Natural killer cell (primary cell): ENCODE measurements at regions of chr1 and their contacts with region 1.

Region 1: GRCh38 chr1:192516776-192517297 is 58.7 kb upstream of the RGS1 start:
- DNase-seq: peak; percentile 25 to 94
- ATAC-seq: peak; percentile 85 to 94 (median 93)
- H3K4me3 ChIP-seq: peak overlapping the region; percentile 1
- H3K4me3 Mint-ChIP-seq: peak overlapping the region; percentile 80
- H3K27ac ChIP-seq: peak overlapping the region; percentile 77
- H3K27ac Mint-ChIP-seq: peak overlapping the region; percentile 94 to 95
- H3K4me1 ChIP-seq: peaks cover 12% of the 10 kb centered on the region
- H3K4me1 Mint-ChIP-seq: peaks cover 59 to 65% of the 10 kb centered on the region in 2 donors
- H3K27me3 ChIP-seq: no peaks in the 10 kb centered on the region
- H3K27me3 Mint-ChIP-seq: no peaks in the 10 kb centered on the region
- CTCF ChIP-seq: no peak

Region 2: DNA sequence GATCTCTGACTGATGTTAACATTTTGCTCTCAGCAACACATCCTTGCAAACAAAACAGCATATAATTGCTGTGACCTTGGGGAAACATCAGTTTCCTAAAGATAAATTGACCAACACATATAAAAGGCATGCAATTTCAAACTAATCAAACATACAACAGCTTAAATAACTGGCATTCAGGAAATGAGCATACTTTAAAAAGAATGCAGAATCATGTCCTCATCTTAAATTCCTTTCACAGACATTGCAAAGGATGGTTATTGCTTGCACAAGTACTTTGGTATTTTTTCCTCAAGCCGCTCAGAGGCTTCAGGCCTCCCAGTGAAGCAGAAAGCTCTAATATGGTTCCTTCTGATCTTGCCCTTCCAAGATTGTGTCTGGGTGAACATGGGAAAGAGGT is 412.0 kb before region 1 on chr1:
- intact Hi-C with region 1: no loop called
- DNase-seq: no peak
- ATAC-seq: no peak
- H3K4me3 ChIP-seq: no peak overlapping the region
- H3K4me3 Mint-ChIP-seq: no peak overlapping the region
- H3K27ac ChIP-seq: no peak overlapping the region
- H3K27ac Mint-ChIP-seq: no peak overlapping the region
- H3K4me1 ChIP-seq: no peaks in the 10 kb centered on the region
- H3K4me1 Mint-ChIP-seq: no peaks in the 10 kb centered on the region
- H3K27me3 ChIP-seq: no peaks in the 10 kb centered on the region
- H3K27me3 Mint-ChIP-seq: no peaks in the 10 kb centered on the region
- CTCF ChIP-seq: no peak

Region 3: GRCh38 chr1:192477630-192478029 is 39.2 kb before region 1 on chr1:
- intact Hi-C with region 1: loop called (anchors 5 kb)
- DNase-seq: peak in 1 of 2 donors; percentile 69
- ATAC-seq: peak in 2 of 3 donors; percentile 70 to 74
- H3K4me3 ChIP-seq: no peak overlapping the region
- H3K4me3 Mint-ChIP-seq: no peak overlapping the region
- H3K27ac ChIP-seq: no peak overlapping the region
- H3K27ac Mint-ChIP-seq: no peak overlapping the region
- H3K4me1 ChIP-seq: no peaks in the 10 kb centered on the region
- H3K4me1 Mint-ChIP-seq: no peaks in the 10 kb centered on the region
- H3K27me3 ChIP-seq: peaks cover 3% of the 10 kb centered on the region
- H3K27me3 Mint-ChIP-seq: no peaks in the 10 kb centered on the region
- CTCF ChIP-seq: peak; percentile 61

Region 4: GRCh38 chr1:192488058-192488457 is 28.8 kb before region 1 on chr1:
- intact Hi-C with region 1: no loop called
- DNase-seq: no peak
- ATAC-seq: no peak
- H3K4me3 ChIP-seq: no peak overlapping the region
- H3K4me3 Mint-ChIP-seq: no peak overlapping the region
- H3K27ac ChIP-seq: no peak overlapping the region
- H3K27ac Mint-ChIP-seq: no peak overlapping the region
- H3K4me1 ChIP-seq: no peaks in the 10 kb centered on the region
- H3K4me1 Mint-ChIP-seq: no peaks in the 10 kb centered on the region
- H3K27me3 ChIP-seq: no peaks in the 10 kb centered on the region
- H3K27me3 Mint-ChIP-seq: no peaks in the 10 kb centered on the region
- CTCF ChIP-seq: no peak

Region 5: GRCh38 chr1:192506741-192507155 is 10.1 kb before region 1 on chr1:
- intact Hi-C with region 1: no loop called
- DNase-seq: peak in 1 of 2 donors; percentile 54
- ATAC-seq: peak in 1 of 3 donors; percentile 58
- H3K4me3 ChIP-seq: no peak overlapping the region
- H3K4me3 Mint-ChIP-seq: no peak overlapping the region
- H3K27ac ChIP-seq: no peak overlapping the region
- H3K27ac Mint-ChIP-seq: no peak overlapping the region
- H3K4me1 ChIP-seq: no peaks in the 10 kb centered on the region
- H3K4me1 Mint-ChIP-seq: no peaks in the 10 kb centered on the region
- H3K27me3 ChIP-seq: no peaks in the 10 kb centered on the region
- H3K27me3 Mint-ChIP-seq: peaks cover 0 to 3% of the 10 kb centered on the region in 2 donors
- CTCF ChIP-seq: peak; percentile 16

Region 6: DNA sequence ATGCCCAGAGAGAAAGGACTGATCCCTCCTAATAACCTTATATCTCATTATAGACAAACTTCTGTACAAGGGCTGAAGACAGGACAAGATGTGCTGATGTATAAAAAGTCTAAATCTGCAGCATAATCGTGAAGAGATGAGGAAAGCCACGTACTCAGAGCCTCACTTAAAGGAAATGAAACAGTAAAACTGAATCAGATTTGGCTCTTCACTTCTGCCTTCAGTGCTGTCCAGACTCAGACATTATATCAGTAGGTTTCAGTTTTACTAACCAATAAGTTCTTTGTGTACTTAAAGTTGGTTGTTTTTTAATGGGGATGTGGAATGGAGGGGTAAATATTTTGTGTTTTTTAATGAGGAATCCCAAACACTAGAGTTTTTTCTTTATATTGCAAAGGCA is 13.4 kb after region 1 on chr1:
- intact Hi-C with region 1: no loop called
- DNase-seq: peak in 1 of 2 donors; percentile 35
- ATAC-seq: peak; percentile 53 to 75 (median 60)
- H3K4me3 ChIP-seq: no peak overlapping the region
- H3K4me3 Mint-ChIP-seq: no peak overlapping the region
- H3K27ac ChIP-seq: no peak overlapping the region
- H3K27ac Mint-ChIP-seq: peak overlapping the region in 1 of 2 donors; percentile 8
- H3K4me1 ChIP-seq: no peaks in the 10 kb centered on the region
- H3K4me1 Mint-ChIP-seq: peaks cover 25 to 32% of the 10 kb centered on the region in 2 donors
- H3K27me3 ChIP-seq: no peaks in the 10 kb centered on the region
- H3K27me3 Mint-ChIP-seq: no peaks in the 10 kb centered on the region
- CTCF ChIP-seq: no peak

Region 7: GRCh38 chr1:192545896-192546521 is 29.2 kb after region 1 on chr1:
- intact Hi-C with region 1: loop called (anchors 2 kb)
- DNase-seq: no peak
- ATAC-seq: peak in 1 of 3 donors; percentile 28
- H3K4me3 ChIP-seq: no peak overlapping the region
- H3K4me3 Mint-ChIP-seq: no peak overlapping the region
- H3K27ac ChIP-seq: no peak overlapping the region
- H3K27ac Mint-ChIP-seq: no peak overlapping the region
- H3K4me1 ChIP-seq: peaks cover 11% of the 10 kb centered on the region
- H3K4me1 Mint-ChIP-seq: peaks cover 41 to 45% of the 10 kb centered on the region in 2 donors
- H3K27me3 ChIP-seq: no peaks in the 10 kb centered on the region
- H3K27me3 Mint-ChIP-seq: no peaks in the 10 kb centered on the region
- CTCF ChIP-seq: no peak

Region 8: DNA sequence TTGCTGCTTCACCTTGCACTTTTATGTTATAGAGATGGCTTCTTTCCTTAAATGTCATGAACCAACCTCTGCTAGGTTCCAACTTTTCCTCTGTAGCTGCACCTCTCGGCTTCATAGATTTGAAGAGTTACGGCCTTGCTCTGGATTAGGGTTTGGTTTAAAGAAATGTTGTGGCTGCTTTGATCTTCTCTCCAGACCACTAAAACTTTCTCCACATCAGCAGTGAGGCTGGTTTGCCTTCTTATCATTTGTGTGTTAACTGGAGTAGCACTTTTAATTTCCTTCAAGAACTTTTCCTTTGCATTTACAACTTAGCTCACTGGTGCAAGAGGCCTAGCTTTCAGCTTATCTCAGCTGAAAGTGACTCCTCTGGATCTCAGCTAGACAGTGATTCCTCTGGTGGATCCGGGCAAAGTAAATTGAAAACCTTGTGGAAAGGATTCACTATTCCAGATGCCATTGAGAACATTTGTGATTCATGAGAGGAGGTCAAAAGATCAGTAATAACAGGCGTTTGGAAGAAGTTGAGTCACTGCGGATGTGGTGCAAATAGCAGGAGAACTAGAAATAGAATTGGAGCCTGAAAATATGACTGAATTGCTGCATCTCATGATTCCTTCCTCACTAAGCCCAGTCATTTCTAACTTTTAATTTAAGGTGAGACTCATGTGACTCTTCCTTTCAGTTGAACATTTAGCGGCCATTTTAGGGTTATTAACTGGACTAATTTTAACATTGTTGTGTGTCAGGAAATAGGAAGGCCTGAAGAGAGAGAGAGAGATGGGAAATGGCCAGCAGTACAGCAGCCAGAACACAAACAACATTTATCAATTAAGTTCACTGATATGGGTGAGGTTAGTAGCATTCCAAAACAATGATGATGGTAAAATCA is 42.5 kb after region 1 on chr1:
- intact Hi-C with region 1: loop called (anchors 5 kb)
- DNase-seq: no peak
- ATAC-seq: no peak
- H3K4me3 ChIP-seq: no peak overlapping the region
- H3K4me3 Mint-ChIP-seq: no peak overlapping the region
- H3K27ac ChIP-seq: no peak overlapping the region
- H3K27ac Mint-ChIP-seq: no peak overlapping the region
- H3K4me1 ChIP-seq: no peaks in the 10 kb centered on the region
- H3K4me1 Mint-ChIP-seq: peaks cover 4 to 5% of the 10 kb centered on the region in 2 donors
- H3K27me3 ChIP-seq: no peaks in the 10 kb centered on the region
- H3K27me3 Mint-ChIP-seq: no peaks in the 10 kb centered on the region
- CTCF ChIP-seq: no peak

Region 9: DNA sequence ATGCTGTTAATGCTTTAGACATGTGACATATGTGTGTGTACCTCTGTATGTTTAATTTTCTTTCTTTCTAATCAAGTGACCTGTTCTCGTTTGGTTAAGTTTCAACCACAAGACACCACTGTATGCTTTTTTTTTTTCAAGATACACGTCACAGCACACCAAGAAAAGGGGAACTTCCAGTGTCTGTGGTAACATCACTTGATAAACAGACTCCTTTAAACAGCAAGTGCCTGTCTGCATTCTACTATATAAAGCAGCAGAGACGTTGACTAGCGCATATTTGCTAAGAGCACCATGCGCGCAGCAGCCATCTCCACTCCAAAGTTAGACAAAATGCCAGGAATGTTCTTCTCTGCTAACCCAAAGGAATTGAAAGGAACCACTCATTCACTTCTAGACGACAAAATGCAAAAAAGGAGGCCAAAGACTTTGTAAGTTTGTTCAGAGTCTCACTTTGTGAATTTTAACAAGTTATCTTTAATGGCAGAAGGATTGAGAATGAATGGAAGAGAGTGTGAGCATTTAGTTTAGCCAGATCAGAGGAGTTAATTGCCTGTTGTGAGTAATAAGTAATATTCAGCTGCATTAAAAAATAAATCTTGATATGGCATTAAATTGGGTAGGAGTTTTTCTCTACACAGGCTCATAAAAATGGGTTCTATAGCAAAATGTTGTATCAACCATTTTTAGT is 58.8 kb after region 1 on chr1 and contains the start of gene RGS1:
- intact Hi-C with region 1: loop called (anchors 1 kb)
- DNase-seq: peak; percentile 62 to 90
- ATAC-seq: peak; percentile 88 to 91 (median 88)
- H3K4me3 ChIP-seq: peak within 1 kb of the TSS; percentile 21
- H3K4me3 Mint-ChIP-seq: peak within 1 kb of the TSS; percentile 89
- H3K27ac ChIP-seq: peak within 1 kb of the TSS; percentile 81
- H3K27ac Mint-ChIP-seq: peak within 1 kb of the TSS; percentile 91 to 92
- H3K4me1 ChIP-seq: peaks cover 3% of the 10 kb centered on the region
- H3K4me1 Mint-ChIP-seq: peaks cover 25 to 56% of the 10 kb centered on the region in 2 donors
- H3K27me3 ChIP-seq: no peaks in the 10 kb centered on the region
- H3K27me3 Mint-ChIP-seq: no peaks in the 10 kb centered on the region
- CTCF ChIP-seq: no peak
- total RNA-seq, gene RGS1: 306 to 365 (median 343) TPM

Region 10: DNA sequence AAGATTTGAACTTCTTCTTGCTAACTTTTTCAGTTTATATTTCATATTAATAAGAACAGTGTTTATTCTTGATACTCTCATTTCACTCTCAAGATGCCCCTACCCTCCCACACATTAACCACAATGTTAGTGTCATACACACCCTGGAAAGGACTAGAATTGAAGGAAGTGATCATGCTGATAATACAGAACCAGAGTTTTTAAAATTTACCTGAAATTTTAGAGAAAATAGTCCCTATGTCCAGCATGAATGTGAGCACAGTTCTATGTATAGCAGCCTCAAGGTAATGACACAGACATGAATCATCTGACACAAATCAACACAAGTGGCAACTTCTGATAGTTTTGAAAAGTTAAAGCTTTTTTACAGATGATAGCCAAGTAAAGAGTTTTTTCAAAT is 84.7 kb after region 1 on chr1:
- intact Hi-C with region 1: loop called (anchors 2 kb)
- DNase-seq: no peak
- ATAC-seq: peak in 2 of 3 donors; percentile 30 to 44
- H3K4me3 ChIP-seq: no peak overlapping the region
- H3K4me3 Mint-ChIP-seq: peak overlapping the region; percentile 73
- H3K27ac ChIP-seq: no peak overlapping the region
- H3K27ac Mint-ChIP-seq: peak overlapping the region; percentile 66 to 71
- H3K4me1 ChIP-seq: peaks cover 6% of the 10 kb centered on the region
- H3K4me1 Mint-ChIP-seq: peaks cover 52 to 69% of the 10 kb centered on the region in 2 donors
- H3K27me3 ChIP-seq: no peaks in the 10 kb centered on the region
- H3K27me3 Mint-ChIP-seq: no peaks in the 10 kb centered on the region
- CTCF ChIP-seq: no peak